GM12878 (cell line): ENCODE measurements at regions of chr7 and their contacts with region 1.

Region 1: GRCh38 chr7:43071604-43072003 is 40.8 kb upstream of the HECW1 start:
- DNase-seq: no peak
- ATAC-seq: peak; percentile 48
- H3K4me3 ChIP-seq: no peak overlapping the region
- H3K27ac ChIP-seq: no peak overlapping the region
- H3K4me1 ChIP-seq: peaks cover 13% of the 10 kb centered on the region
- H3K27me3 ChIP-seq: no peaks in the 10 kb centered on the region
- CTCF ChIP-seq: peak; percentile 16 to 43 (median 34); a peak in 3 of 6 replicates
- EP300 ChIP-seq: no peak
- POLR2A ChIP-seq: no peak
- RAD21 ChIP-seq: peak; percentile 23; the same call in 1 of the 2 replicates

Region 2: GRCh38 chr7:42931834-42932651 is 139.6 kb before region 1 on chr7 and contains the starts of genes MRPL32 and PSMA2:
- CTCF ChIA-PET with region 1: interaction called, 3 read pairs
- POLR2A ChIA-PET with region 1: no interaction called
- RAD21 ChIA-PET with region 1: interaction called, 10 read pairs
- SMC1A ChIA-PET with region 1: interaction called, 4 read pairs
- in situ Hi-C with region 1: no loop called
- intact Hi-C with region 1: no loop called
- DNase-seq: peak; percentile 95
- ATAC-seq: peak; percentile 97
- H3K4me3 ChIP-seq: peak within 1 kb of the TSS; percentile 94
- H3K27ac ChIP-seq: peak within 1 kb of the TSS; percentile 86
- H3K4me1 ChIP-seq: peaks cover 15% of the 10 kb centered on the region; the same call in 1 of the 2 replicates
- H3K27me3 ChIP-seq: no peaks in the 10 kb centered on the region
- CTCF ChIP-seq: no peak
- EP300 ChIP-seq: no peak
- POLR2A ChIP-seq: peak; percentile 96
- RAD21 ChIP-seq: no peak
- polyA plus RNA-seq, gene MRPL32: 274 to 339 TPM
- polyA plus RNA-seq, gene PSMA2: 1,068 to 1,223 TPM

Region 3: DNA sequence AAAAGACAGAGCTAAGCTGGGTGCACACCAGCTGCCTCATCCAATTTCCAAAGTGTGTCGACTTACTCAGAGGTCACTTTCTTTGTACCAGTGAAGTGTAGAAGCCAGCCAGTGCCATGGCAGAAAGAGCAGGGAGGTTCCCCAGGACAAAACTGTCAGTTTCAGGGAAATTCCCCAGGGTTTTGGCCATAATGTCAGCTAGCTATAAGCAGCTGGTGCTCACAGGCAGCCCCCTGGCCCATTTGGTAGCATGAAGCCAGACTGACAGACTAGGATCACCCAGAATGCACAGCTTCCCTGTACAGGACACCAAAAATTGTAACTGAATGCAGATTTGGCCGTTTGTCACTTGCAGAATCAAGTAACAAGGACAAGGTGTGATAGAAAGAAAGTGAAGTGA is 110.8 kb before region 1 on chr7:
- CTCF ChIA-PET with region 1: interaction called, 5 read pairs
- POLR2A ChIA-PET with region 1: no interaction called
- RAD21 ChIA-PET with region 1: interaction called, 8 read pairs
- SMC1A ChIA-PET with region 1: interaction called, 11 read pairs
- in situ Hi-C with region 1: no loop called
- intact Hi-C with region 1: no loop called
- DNase-seq: no peak
- ATAC-seq: peak; percentile 90
- H3K4me3 ChIP-seq: no peak overlapping the region
- H3K27ac ChIP-seq: no peak overlapping the region
- H3K4me1 ChIP-seq: no peaks in the 10 kb centered on the region
- H3K27me3 ChIP-seq: no peaks in the 10 kb centered on the region
- CTCF ChIP-seq: no peak
- EP300 ChIP-seq: no peak
- POLR2A ChIP-seq: no peak
- RAD21 ChIP-seq: no peak

Region 4: DNA sequence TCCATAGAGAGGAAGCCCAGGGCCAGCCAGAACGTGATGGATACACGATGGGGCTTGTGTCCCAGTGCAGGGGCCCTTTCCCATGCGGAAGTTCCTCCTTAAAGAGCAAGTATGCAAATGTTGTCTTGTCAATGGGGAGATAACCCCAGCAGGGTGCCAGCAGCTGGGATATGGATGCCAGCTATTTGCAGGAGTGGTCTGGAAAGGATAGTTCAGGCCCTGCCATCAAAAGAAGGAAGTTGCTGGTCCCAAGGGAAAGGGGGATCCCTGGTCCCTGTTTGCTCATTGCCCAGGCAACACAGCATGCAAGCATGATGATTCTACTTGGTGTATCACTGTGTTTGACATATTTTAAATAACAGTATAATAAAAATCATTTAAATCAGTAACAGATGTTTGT is 32.3 kb before region 1 on chr7:
- CTCF ChIA-PET with region 1: no interaction called
- POLR2A ChIA-PET with region 1: no interaction called
- RAD21 ChIA-PET with region 1: no interaction called
- SMC1A ChIA-PET with region 1: no interaction called
- in situ Hi-C with region 1: no loop called
- intact Hi-C with region 1: no loop called
- DNase-seq: no peak
- ATAC-seq: no peak
- H3K4me3 ChIP-seq: no peak overlapping the region
- H3K27ac ChIP-seq: no peak overlapping the region
- H3K4me1 ChIP-seq: no peaks in the 10 kb centered on the region
- H3K27me3 ChIP-seq: no peaks in the 10 kb centered on the region
- CTCF ChIP-seq: no peak
- EP300 ChIP-seq: no peak
- POLR2A ChIP-seq: no peak
- RAD21 ChIP-seq: no peak

Region 5: GRCh38 chr7:43058271-43059066 is 13.1 kb before region 1 on chr7:
- CTCF ChIA-PET with region 1: interaction called, 19 read pairs
- POLR2A ChIA-PET with region 1: interaction called, 10 read pairs
- RAD21 ChIA-PET with region 1: interaction called, 18 read pairs
- SMC1A ChIA-PET with region 1: interaction called, 52 read pairs
- in situ Hi-C with region 1: no loop called
- intact Hi-C with region 1: no loop called
- DNase-seq: peak; percentile 53
- ATAC-seq: peak; percentile 61
- H3K4me3 ChIP-seq: no peak overlapping the region
- H3K27ac ChIP-seq: no peak overlapping the region
- H3K4me1 ChIP-seq: peaks cover 17% of the 10 kb centered on the region
- H3K27me3 ChIP-seq: no peaks in the 10 kb centered on the region
- CTCF ChIP-seq: no peak
- EP300 ChIP-seq: no peak
- POLR2A ChIP-seq: no peak
- RAD21 ChIP-seq: no peak

Region 6: GRCh38 chr7:43108255-43109011 is 36.8 kb after region 1 on chr7:
- CTCF ChIA-PET with region 1: interaction called, 13 read pairs
- POLR2A ChIA-PET with region 1: no interaction called
- RAD21 ChIA-PET with region 1: interaction called, 6 read pairs
- SMC1A ChIA-PET with region 1: interaction called, 13 read pairs
- in situ Hi-C with region 1: no loop called
- intact Hi-C with region 1: no loop called
- DNase-seq: peak; percentile 31
- ATAC-seq: peak; percentile 88
- H3K4me3 ChIP-seq: no peak overlapping the region
- H3K27ac ChIP-seq: no peak overlapping the region
- H3K4me1 ChIP-seq: no peaks in the 10 kb centered on the region
- H3K27me3 ChIP-seq: no peaks in the 10 kb centered on the region
- CTCF ChIP-seq: peak; percentile 89 to 98 (median 95); a peak in 5 of 6 replicates
- EP300 ChIP-seq: no peak
- POLR2A ChIP-seq: no peak
- RAD21 ChIP-seq: peak; percentile 86

Region 7: DNA sequence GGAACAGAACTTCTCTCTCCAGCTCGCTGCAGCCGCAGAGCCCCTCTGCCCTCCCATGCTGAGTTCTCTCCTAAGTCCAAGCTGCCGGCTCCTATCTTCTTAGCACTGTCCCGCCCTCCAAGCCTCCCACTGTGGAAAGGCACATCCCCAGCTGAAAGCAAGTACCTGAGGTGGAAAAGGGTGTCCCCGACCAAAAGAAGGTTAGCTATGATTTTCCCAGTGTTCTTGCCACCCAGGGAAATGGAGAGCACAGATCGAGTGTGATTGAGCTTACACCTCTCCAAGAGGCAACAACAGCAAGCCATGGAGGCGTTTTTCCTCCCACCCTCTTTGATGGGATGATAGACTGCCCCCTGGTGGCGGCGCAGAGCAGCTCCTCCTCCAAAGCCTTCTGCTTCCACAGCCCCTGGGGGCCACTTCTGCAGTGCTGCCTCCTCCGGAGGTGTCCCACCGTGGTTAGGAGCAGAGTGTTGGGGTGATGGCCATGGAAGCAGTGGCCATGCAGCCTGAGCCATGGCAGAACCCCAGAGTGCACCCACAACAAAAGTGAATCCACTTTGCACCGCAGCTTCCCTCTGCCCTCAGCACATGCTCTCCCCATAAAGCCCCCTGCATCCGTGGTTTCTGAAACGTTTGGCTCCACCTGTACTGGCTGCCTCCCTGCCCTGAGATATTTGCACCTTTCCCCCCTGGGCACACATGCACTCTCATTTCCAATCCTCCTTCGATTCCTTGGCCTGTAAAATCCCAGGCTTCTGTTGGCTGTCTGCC is 368.2 kb after region 1 on chr7:
- CTCF ChIA-PET with region 1: interaction called, 10 read pairs
- POLR2A ChIA-PET with region 1: no interaction called
- RAD21 ChIA-PET with region 1: no interaction called
- SMC1A ChIA-PET with region 1: interaction called, 4 read pairs
- in situ Hi-C with region 1: no loop called
- intact Hi-C with region 1: no loop called
- DNase-seq: peak; percentile 13
- ATAC-seq: peak; percentile 97
- H3K4me3 ChIP-seq: no peak overlapping the region
- H3K27ac ChIP-seq: no peak overlapping the region
- H3K4me1 ChIP-seq: no peaks in the 10 kb centered on the region
- H3K27me3 ChIP-seq: no peaks in the 10 kb centered on the region; a peak in 1 of 4 replicates
- CTCF ChIP-seq: peak; percentile 81 to 92 (median 89)
- EP300 ChIP-seq: no peak
- POLR2A ChIP-seq: no peak
- RAD21 ChIP-seq: peak; percentile 66